Sigmoid colon (tissue), 7 donors: ENCODE measurements at regions of chr7 and their contacts with region 1.

Region 1: GRCh38 chr7:5494683-5495561 is 71.3 kb upstream of the TNRC18 start:
- DNase-seq: peak; percentile 88
- H3K4me3 ChIP-seq: peak overlapping the region; percentile 14 to 51 (median 42)
- H3K27ac ChIP-seq: peak overlapping the region; percentile 69 to 87 (median 82)
- H3K4me1 ChIP-seq: peaks cover 0 to 49% (median 45%) of the 10 kb centered on the region in 4 donors
- H3K27me3 ChIP-seq: no peaks in the 10 kb centered on the region
- CTCF ChIP-seq: peak; percentile 89 to 95 (median 90)
- EP300 ChIP-seq: no peak
- POLR2A ChIP-seq: no peak

Region 2: GRCh38 chr7:5387711-5388245 is 107.1 kb before region 1 on chr7:
- intact Hi-C with region 1: no loop called
- DNase-seq: no peak
- H3K4me3 ChIP-seq: no peak overlapping the region
- H3K27ac ChIP-seq: peak overlapping the region; percentile 25 to 70 (median 62)
- H3K4me1 ChIP-seq: peaks cover 0 to 65% (median 53%) of the 10 kb centered on the region in 4 donors
- H3K27me3 ChIP-seq: no peaks in the 10 kb centered on the region
- CTCF ChIP-seq: no peak
- EP300 ChIP-seq: no peak
- POLR2A ChIP-seq: no peak

Region 3: DNA sequence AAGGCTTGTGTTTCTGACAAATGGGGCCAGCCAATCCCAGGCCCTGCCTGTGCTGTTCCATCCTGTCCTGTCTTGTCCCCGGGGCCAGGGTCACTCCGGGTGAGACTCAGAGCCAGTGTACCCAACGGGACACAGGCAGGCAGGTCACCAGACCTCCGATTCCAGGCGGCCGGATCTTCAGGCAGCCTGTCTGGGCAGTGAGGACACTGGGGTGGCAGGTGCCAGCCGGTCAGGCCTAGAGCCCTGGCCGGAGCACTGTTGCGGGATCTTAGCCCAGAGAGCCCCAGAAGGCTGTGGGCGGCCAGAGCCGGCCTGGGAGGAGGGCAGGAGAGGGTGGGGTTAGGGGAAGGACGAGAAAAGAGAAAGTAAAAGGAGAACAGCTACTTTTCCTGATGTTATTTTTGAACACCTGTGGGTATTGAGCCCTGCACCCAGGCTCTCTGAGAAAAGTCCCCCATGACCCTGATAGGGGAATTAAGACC is 63.0 kb after region 1 on chr7:
- intact Hi-C with region 1: loop called (anchors 1 kb)
- DNase-seq: peak; percentile 85
- H3K4me3 ChIP-seq: peak overlapping the region; percentile 11 to 74 (median 68)
- H3K27ac ChIP-seq: peak overlapping the region; percentile 99 to 100 (median 100)
- H3K4me1 ChIP-seq: peaks cover 0 to 67% (median 58%) of the 10 kb centered on the region in 4 donors
- H3K27me3 ChIP-seq: no peaks in the 10 kb centered on the region
- CTCF ChIP-seq: no peak
- EP300 ChIP-seq: no peak
- POLR2A ChIP-seq: no peak

Region 4: GRCh38 chr7:5665094-5666025 is 170.4 kb after region 1 on chr7:
- intact Hi-C with region 1: loop called (anchors 2 kb)
- DNase-seq: peak; percentile 87
- H3K4me3 ChIP-seq: no peak overlapping the region
- H3K27ac ChIP-seq: peak overlapping the region; percentile 17 to 99 (median 75)
- H3K4me1 ChIP-seq: peaks cover 0 to 62% (median 40%) of the 10 kb centered on the region in 4 donors
- H3K27me3 ChIP-seq: no peaks in the 10 kb centered on the region
- CTCF ChIP-seq: peak; percentile 79 to 94 (median 82)
- EP300 ChIP-seq: no peak
- POLR2A ChIP-seq: no peak

Region 5: GRCh38 chr7:5677538-5678294 is 182.8 kb after region 1 on chr7:
- intact Hi-C with region 1: loop called (anchors 2 kb)
- DNase-seq: peak; percentile 88
- H3K4me3 ChIP-seq: no peak overlapping the region
- H3K27ac ChIP-seq: peak overlapping the region; percentile 73 to 99 (median 86)
- H3K4me1 ChIP-seq: peaks cover 0 to 83% (median 76%) of the 10 kb centered on the region in 4 donors
- H3K27me3 ChIP-seq: no peaks in the 10 kb centered on the region
- CTCF ChIP-seq: peak in 3 of 4 experiments; percentile 66 to 75 (median 72)
- EP300 ChIP-seq: no peak
- POLR2A ChIP-seq: no peak

Region 6: DNA sequence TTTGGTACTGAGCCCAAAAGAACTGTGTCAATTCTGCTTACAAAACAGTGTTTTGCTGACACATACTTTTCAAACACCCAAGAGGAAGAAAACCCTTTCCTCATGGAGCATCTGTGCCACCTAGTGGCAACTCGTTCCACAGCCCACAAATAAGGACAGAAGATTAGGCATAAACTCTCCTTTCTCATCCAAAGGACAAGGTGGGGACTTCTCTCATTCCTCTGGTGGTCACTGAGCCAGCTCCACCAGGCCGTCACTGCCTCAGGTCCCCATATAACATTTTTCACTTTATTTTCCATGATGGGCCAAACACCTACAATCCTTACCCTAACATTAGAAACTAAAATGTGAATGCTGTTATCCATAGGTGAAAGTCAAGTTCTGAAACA is 209.6 kb after region 1 on chr7:
- intact Hi-C with region 1: loop called (anchors 2 kb)
- DNase-seq: peak; percentile 90
- H3K4me3 ChIP-seq: no peak overlapping the region
- H3K27ac ChIP-seq: peak overlapping the region; percentile 93 to 99 (median 94)
- H3K4me1 ChIP-seq: peaks cover 0 to 63% (median 48%) of the 10 kb centered on the region in 4 donors
- H3K27me3 ChIP-seq: no peaks in the 10 kb centered on the region
- CTCF ChIP-seq: peak; percentile 86 to 97 (median 91)
- EP300 ChIP-seq: no peak
- POLR2A ChIP-seq: no peak

Region 7: DNA sequence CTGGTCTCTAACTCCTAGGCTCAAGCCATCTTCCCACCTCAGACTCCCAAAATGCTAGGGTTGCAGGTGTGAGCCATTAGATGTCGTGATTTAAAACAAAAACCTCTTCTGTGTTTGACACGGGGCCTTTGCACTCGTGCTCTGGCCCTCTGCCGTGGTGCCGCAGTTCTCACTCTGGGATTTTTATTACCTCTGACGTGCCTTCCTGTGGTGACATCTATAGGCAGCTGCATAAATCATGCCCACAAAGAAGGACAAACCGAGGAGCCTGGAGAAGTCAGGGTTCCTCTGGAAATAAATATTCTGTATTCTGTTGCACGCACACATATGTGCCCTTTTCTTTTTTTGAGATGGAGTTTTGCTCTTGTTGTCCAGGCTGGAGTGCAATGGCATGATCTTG is 359.8 kb after region 1 on chr7:
- intact Hi-C with region 1: no loop called
- DNase-seq: no peak
- H3K4me3 ChIP-seq: no peak overlapping the region
- H3K27ac ChIP-seq: no peak overlapping the region
- H3K4me1 ChIP-seq: peaks cover 0 to 3% (median 0%) of the 10 kb centered on the region in 4 donors
- H3K27me3 ChIP-seq: no peaks in the 10 kb centered on the region
- CTCF ChIP-seq: no peak
- EP300 ChIP-seq: no peak
- POLR2A ChIP-seq: no peak